Heart left ventricle (tissue), 16 donors: ENCODE measurements at regions of chr15 and their contacts with region 1.

Region 1: DNA sequence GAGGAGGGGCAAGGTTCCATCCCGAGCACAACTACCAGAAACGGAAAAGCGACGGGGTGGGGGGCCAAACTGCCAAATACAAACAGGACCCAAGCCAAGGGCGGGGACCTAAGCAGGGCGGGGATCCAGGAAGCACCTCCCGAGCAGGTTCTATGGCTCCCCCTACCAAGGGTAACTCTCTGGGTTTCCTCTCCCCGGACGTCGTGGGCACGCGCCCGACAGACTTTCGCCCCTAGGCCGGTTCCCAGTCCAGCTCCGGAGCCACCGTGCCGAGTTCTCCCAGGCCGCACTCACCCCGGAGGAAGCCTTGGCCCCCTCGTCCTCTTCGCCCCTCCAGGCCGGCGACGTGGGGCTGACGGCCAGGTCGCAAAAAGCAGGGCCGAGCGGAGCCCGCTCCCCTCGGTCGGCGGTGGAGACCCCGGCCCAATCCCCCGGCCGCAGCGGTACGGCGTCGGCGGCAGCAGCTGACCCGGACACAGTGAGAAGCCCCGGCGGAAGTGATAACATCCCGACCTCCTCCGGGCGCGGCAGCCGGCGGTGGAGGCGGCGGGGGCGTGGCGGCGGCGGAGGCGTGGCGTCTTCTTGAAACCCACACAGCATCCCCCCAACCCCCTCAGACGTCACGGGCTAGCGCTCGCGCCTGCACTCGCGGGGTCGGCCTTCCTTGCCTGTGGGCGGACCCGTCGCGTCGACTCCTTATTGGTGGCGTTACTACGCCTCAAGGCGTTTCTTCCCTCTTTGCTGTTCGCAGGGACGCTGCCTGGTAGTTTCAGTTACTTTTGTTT is at the start of gene BNIP2:
- DNase-seq: peak; percentile 99 to 100 (median 100)
- ATAC-seq: peak; percentile 98
- H3K4me3 ChIP-seq: peak within 1 kb of the TSS; percentile 63 to 99 (median 90)
- H3K27ac ChIP-seq: peak within 1 kb of the TSS; percentile 92 to 100 (median 98)
- H3K4me1 ChIP-seq: peaks cover 0 to 49% (median 36%) of the 10 kb centered on the region in 12 donors
- H3K27me3 ChIP-seq: no peaks in the 10 kb centered on the region
- CTCF ChIP-seq: peak in 1 of 12 donors; percentile 17
- POLR2A ChIP-seq: peak in 1 of 2 donors; percentile 77
- total RNA-seq, gene BNIP2: 70.5 to 103 (median 87.1) TPM

Region 2: DNA sequence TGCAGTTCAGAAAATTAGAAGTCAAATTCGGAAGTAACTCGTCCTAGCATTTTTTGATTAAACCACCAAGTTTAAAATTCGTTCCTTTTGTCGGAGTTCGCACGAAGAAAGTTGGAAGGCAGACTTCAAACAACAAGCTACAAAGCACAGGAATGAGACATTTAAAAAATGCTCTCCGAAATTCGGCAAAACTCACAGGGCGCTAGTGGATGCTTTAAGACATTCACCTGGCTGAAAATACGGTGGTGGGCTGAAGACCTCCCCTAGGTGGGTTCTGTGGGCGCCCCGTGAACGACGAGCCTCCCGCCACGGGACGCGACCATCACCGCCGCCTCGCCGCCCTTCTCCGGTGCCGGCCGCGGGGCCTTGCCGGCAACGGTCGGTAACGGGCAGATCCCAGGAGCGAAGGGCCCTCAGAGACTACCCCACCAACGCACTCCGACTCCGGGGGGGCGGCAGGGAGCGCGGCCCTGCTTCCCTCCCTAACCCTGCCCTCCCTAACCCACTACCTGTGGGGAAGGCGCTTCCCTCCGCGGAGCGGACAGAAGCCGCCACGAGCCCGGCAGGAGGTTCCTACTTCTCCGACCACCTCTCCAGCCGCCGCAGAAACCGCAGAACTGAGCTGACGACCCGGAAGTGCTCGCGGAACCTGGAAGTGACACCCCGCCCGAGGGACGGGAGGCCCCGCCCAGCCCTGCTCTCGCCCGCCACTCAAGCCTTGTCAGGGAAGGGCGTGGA is 32.0 kb before region 1 on chr15 and contains the start of gene GTF2A2:
- intact Hi-C with region 1: loop called in 1 of 10 experiments (anchors 2 kb)
- DNase-seq: peak; percentile 94 to 98 (median 96)
- ATAC-seq: peak; percentile 100
- H3K4me3 ChIP-seq: peak within 1 kb of the TSS; percentile 72 to 98 (median 82)
- H3K27ac ChIP-seq: peak within 1 kb of the TSS in 11 of 12 donors; percentile 55 to 93 (median 84)
- H3K4me1 ChIP-seq: peaks cover 0 to 27% (median 19%) of the 10 kb centered on the region in 12 donors
- H3K27me3 ChIP-seq: no peaks in the 10 kb centered on the region
- CTCF ChIP-seq: no peak
- POLR2A ChIP-seq: peak in 1 of 2 donors; percentile 62
- total RNA-seq, gene GTF2A2: 23.8 to 156 (median 115) TPM

Region 3: GRCh38 chr15:59801649-59802048 is 112.6 kb after region 1 on chr15:
- intact Hi-C with region 1: no loop called
- DNase-seq: no peak
- ATAC-seq: no peak
- H3K4me3 ChIP-seq: no peak overlapping the region
- H3K27ac ChIP-seq: no peak overlapping the region
- H3K4me1 ChIP-seq: no peaks in the 10 kb centered on the region
- H3K27me3 ChIP-seq: peaks cover 0 to 17% (median 0%) of the 10 kb centered on the region in 9 donors
- CTCF ChIP-seq: no peak
- POLR2A ChIP-seq: no peak

Region 4: DNA sequence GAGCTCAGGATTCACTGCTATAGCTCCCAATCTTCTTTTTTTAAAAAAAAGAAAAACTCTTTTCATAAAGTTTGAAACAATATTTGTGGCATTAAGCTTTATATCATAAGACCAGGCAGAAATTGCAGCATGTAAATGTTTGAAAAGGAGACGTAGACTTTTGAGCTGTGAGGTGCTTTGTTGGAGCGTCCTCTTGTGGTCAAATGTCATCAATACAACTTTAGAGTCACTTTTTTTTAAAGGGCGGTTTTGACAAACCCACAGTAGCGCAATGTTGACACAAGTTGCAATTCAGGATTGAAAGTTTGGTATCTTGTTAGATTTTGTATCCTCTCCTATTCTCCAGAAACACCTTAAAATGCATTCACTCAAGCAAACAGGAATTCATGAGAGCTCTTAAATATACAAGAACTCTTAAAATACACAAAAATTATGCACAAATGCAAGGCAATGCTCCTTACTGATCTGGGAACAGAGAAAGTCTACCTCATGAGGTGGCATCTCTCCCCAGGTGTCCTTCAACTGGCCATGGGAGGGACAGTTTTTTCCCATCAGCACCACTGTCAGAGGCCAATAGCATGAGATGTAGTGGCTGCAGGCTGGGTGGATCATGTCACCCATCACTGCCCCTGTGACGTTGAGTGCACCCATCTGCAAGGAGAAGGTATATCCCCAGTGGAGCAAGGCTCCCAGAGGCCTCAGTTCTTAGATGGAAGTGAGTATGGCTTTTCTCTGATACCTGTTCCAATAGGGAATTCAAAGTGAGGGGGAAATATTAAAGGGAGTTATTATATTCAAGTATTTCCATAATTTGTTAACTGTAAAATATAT is 638.0 kb after region 1 on chr15:
- intact Hi-C with region 1: loop called in 5 of 10 experiments (anchors 2 to 10 kb)
- DNase-seq: no peak
- ATAC-seq: no peak
- H3K4me3 ChIP-seq: no peak overlapping the region
- H3K27ac ChIP-seq: no peak overlapping the region
- H3K4me1 ChIP-seq: peaks cover 0 to 4% (median 0%) of the 10 kb centered on the region in 12 donors
- H3K27me3 ChIP-seq: peaks cover 0 to 51% (median 23%) of the 10 kb centered on the region in 9 donors
- CTCF ChIP-seq: peak; percentile 65 to 91 (median 78)
- POLR2A ChIP-seq: no peak